MCF 10A (cell line): ENCODE measurements at regions of chr7 and their contacts with region 1.

Region 1: DNA sequence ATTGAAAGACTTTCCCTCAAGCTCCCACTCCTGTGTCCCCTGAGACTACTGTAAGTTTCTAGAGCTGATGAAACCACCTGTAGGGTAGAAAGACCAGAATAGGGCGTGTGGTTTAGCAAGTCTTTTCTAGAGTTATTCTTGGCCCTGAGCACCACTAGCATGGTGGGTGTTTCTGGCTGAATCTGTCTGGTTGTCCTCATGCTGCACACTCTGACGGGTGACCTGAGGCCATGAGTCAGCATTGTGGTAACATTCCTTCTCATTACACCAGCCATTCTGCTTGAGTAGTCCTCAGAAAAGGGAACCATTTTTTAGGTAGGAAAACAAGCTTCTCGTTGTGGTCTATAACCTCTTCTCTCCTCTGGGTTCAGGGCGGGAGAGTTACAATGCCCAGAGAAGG is 250.3 kb downstream of the SNX13 start:
- DNase-seq: peak; percentile 95
- H3K4me3 Mint-ChIP-seq: no peak overlapping the region
- H3K27ac Mint-ChIP-seq: peak overlapping the region; percentile 89
- H3K4me1 Mint-ChIP-seq: peaks cover 12% of the 10 kb centered on the region
- H3K27me3 Mint-ChIP-seq: no peaks in the 10 kb centered on the region
- CTCF ChIP-seq: no peak

Region 2: GRCh38 chr7:17674166-17674961 is 15.7 kb before region 1 on chr7:
- CTCF ChIA-PET with region 1: interaction called, 3 read pairs
- POLR2A ChIA-PET with region 1: interaction called, 70 read pairs
- intact Hi-C with region 1: no loop called
- DNase-seq: peak; percentile 79
- H3K4me3 Mint-ChIP-seq: no peak overlapping the region
- H3K27ac Mint-ChIP-seq: peak overlapping the region; percentile 97
- H3K4me1 Mint-ChIP-seq: peaks cover 59% of the 10 kb centered on the region
- H3K27me3 Mint-ChIP-seq: no peaks in the 10 kb centered on the region
- CTCF ChIP-seq: no peak